Left cardiac atrium (tissue), 4 donors: ENCODE measurements at regions of chr18 and their contacts with region 1.

Region 1: DNA sequence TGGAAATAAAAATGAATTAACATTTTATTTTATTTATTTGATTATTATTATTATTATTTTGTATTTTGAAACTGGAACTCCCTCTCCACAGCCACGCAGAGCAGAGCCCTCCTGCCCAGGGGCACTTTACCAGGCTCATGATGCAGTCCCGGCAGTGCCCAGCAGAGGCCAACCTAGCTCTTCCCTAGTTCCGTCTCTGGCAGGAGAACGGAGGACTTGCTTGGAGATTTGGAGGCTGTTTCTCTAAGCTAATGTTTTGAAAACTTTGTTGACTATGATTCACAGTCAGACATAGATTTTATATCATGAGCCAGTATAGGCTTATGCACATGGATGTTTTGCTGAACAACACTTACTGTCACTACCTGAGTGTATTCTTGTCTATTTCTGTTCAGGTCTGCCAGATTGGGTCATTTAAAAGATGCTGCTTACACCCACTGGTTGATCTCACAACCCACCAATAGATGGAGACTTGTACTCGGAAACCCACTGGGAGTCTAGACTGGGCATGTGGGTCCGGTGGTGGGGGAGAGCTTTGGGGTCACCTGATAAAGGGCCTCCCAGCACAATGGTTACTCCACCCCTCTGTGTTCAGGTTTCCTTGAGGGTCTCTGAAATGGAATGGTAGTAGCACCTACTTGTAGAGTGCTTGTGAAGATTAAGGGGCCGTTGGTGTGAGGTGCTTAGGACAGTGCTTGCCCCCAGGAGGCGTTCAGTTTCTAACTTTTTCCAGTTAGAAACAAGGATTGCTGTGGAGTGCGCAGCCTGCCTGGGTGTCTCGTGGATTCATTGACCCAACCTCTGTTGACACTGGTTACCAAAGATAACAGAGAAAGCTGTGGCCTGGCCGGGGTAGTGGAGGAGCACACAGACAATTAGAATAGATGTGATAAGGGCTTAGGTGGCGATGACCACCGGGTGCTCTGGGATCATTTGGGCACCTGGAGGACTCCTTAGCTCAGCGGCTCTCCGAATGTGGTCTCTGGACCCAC is 177.3 kb downstream of the HAUS1 start:
- DNase-seq: peak; percentile 66
- ATAC-seq: peak; percentile 88 to 91

Region 2: GRCh38 chr18:45967007-45967706 is 314.3 kb before region 1 on chr18 and contains the start of gene EPG5:
- intact Hi-C with region 1: no loop called
- DNase-seq: peak; percentile 96
- ATAC-seq: peak; percentile 100
- total RNA-seq, gene EPG5: 19.5 to 23.3 TPM

Region 3: DNA sequence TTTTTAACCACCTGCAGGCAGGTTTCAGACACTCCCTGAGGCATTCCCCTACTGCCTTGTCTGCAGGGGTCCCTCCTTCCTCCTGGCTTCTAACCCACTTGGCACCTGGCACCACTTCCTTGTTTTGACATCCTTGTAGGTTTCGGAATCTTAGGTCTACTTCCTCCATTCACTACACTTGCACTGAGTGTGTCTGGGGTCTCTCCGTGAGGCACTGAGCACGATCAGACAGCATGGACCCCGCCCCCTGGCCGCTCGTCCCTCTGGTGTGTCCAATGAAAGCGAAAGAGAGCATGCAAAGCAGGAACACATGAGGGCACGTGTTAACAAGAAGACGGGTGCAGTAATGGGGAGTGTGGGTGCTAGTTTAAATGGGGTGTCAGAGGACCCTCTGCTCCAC is 113.5 kb before region 1 on chr18:
- intact Hi-C with region 1: loop called in 1 of 2 experiments (anchors 10 kb)
- DNase-seq: no peak
- ATAC-seq: no peak

Region 4: GRCh38 chr18:46199515-46200147 is 81.8 kb before region 1 on chr18:
- intact Hi-C with region 1: no loop called
- DNase-seq: no peak
- ATAC-seq: no peak

Region 5: DNA sequence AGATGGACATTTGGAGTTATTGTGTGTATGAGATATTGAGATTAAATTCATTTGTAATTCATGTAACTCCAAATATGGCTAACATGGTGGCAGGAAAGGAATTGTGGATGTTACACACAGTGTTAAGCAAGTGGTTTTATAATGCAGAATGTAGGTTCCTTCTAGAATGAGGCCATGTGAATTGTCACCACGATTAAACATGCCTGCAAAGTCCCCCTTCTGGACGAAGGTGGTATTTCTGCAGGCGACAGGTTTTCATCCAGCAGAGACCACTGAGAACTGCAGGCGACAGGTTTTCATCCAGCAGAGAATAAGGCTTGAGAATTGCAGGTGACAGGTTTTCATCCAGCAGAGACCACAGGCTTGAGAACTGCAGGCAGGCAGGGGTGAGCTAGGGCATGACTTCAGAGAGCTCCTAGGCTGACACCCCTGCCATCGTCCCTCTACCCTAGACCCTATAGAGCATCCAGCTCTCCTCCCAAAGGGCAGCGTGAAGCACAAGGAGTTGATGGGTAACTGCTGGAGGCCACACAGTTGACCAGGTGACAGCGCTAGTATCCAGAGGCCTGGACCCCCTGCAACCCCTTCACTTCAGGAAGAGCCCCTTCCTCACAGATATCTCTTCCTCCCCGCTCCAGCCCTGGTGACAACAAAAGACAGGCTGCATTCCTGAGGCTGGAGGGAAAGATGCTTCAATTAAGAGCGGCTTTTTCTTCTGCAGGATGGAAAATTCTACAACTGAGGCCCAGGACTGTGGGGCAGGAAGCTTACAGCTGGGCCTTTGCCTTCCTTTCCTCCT is 199.8 kb after region 1 on chr18:
- intact Hi-C with region 1: loop called in 1 of 2 experiments (anchors 5 kb)
- DNase-seq: peak; percentile 40
- ATAC-seq: peak in 1 of 2 donors; percentile 41

Region 6: DNA sequence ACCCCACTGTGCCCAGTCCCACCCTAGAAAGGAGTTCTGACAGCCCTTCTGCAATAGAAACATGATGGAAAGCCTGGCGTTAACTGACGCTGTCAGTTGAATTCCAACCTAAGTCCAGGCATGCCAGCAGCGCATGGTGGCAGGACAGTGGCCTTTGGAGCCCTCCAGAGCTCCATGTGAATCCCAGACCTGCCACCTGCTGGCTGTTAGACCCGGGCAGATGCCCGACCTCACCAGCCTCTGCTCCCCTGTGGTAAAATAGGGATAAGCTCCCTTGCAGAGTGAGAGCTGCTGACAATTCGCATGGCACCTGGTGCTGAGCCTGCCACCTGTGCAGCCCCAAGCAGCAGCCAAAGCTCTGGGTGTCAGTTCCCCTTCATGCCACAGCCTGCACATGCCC is 237.0 kb after region 1 on chr18:
- intact Hi-C with region 1: loop called (anchors 2 to 5 kb)
- DNase-seq: peak; percentile 36
- ATAC-seq: peak; percentile 82 to 84

Region 7: DNA sequence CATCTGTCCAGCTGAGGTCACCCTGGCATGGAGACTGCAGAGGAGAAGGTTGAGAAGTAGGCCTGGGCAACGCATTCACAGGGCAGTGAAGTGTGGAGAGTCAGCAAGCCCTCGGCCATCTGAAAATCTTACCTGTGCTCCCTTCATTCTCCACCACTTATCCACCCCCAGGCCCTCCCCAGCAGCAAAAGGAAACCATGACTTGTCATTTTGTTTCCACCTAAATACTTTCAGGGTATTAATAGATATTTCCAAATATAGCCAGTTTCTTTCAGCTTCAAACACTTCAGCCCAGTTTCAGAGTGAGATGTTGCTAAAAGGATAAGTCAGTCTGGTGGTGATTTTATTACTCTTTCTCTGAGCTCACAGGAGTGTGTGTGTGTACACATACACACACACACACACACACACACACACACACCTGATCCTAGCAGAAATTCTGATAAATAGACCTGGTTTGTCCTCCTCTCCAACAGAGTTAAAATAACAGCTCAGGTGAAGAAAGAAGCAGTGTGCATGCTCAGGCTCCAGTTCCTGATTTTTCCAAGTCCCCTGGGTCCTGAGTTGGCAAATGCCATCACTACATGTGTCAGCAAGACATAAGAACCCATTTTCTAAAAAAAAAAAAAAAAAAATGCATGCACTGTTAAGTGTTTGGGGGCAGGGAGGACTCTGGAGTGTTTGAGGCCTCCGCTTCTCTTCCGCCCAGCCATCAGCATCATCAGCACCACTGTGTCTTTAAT is 292.7 kb after region 1 on chr18:
- intact Hi-C with region 1: no loop called
- DNase-seq: no peak
- ATAC-seq: no peak

Region 8: GRCh38 chr18:46641917-46642316 is 360.4 kb after region 1 on chr18:
- intact Hi-C with region 1: loop called in 1 of 2 experiments (anchors 10 kb)
- DNase-seq: no peak
- ATAC-seq: peak; percentile 47 to 76

Region 9: DNA sequence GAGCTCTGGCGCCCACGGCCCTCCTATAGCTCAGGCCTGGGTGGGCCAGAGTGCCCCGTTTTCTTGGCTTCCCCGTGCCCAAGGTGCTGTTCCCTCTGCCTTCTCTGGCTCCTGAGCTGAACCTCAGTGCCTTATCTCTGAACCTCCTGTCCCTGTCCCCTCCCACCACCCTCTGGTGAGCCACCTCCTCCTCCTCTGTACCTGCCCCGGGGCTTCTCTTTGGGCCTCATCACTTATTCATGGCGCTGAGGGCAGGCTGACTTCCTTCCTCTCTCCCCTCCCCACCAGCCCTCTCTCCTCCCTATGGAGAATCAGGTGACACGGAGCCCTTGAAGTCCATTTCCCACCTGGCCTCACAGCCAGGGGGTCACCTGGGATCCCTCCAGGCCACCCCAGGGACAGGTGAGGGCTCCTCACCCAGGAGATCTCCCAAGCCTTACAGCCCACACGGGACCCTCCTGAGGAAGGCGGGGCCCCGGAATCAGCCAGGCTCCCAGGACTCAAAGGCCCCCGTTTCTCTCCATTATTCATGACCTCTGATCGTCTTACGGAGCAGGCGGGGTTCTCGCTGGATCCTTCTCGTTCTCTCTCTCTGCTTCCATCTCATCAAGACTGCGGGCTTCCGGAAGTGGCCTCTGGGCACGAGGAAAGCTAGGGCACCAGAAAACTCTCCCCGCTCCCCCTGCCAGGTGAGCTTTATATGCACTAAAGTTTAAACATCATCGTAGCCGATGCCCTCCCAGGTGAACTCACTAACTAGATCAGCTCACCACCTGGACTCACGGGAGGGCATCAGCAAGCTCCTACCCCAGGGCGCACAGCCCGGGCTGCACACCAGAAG is 375.9 kb after region 1 on chr18 and contains the start of gene LOXHD1:
- intact Hi-C with region 1: loop called in 1 of 2 experiments (anchors 5 kb)
- DNase-seq: no peak
- ATAC-seq: no peak
- total RNA-seq, gene LOXHD1: 0.24 to 0.59 TPM